ENCODE measurements at regions of chr19 and their contacts with region 1.

Region 1: DNA sequence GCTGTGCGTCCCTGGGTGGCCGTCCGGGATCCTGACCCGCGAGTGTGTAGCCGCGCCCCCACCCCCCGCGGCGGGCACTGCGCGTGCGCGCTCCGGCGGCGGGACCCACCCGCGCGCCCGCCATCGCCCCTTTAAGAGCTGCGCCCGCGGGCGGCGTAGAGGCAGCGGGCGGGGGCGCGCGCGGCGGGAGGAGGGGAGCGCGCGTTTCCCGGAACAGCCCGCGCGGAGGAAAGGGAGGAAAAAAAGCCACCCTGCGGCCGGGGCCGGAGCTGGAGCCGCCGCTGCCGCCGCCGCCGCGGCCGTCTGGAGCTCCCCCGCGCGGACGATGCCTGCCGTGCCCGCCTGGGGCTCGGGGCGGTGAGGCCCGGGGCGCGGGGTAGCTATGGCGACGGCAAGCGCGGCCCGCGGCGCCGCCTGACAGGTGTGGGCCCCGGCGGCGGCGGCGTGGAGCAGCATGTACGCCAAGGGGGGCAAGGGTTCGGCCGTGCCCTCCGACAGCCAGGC is at the start of gene SSBP4:
- DNase-seq: peak; percentile 77 to 90
- H3K4me3 ChIP-seq: peak within 1 kb of the TSS; percentile 85
- H3K4me3 Mint-ChIP-seq: peak within 1 kb of the TSS; percentile 89
- H3K27ac Mint-ChIP-seq: peak within 1 kb of the TSS; percentile 24
- H3K4me1 ChIP-seq: peaks cover 41% of the 10 kb centered on the region
- H3K4me1 Mint-ChIP-seq: peaks cover 7% of the 10 kb centered on the region
- H3K27me3 ChIP-seq: no peaks in the 10 kb centered on the region
- H3K27me3 Mint-ChIP-seq: no peaks in the 10 kb centered on the region
- CTCF ChIP-seq: peak; percentile 22 to 39
- total RNA-seq, gene SSBP4: 46.2 and 49.4 TPM in 2 replicates

Region 2: DNA sequence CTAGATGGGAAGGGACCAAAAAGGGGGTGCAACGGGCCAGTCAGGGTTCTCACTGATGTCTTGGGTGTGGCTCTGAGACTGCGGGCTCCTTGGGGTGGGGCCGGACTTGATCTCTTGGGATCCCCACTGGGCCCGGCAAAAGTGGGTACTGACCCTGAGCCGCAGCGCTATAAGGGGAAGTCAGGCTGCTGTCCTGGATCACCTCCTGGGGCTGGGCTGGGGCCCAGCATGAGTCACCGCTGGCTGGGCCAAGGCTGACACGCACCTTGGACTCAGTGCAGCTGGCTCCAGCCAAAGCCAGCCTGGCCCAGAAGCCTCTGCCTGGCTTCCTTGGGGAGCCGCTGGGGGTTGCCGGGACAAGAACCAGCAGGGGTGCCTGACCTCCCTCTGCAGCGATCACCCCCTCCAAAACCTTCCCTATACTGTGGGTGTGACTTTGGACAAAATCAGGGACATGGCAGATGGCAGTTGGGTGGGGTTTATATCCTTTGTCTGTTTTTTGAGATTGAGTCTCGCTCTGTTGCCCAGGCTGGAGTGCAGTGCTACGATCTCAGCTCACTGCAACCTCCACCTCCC is 144.4 kb before region 1 on chr19:
- CTCF ChIA-PET with region 1: interaction called, 15 read pairs
- POLR2A ChIA-PET with region 1: interaction called, 14 read pairs
- intact Hi-C with region 1: no loop called
- DNase-seq: peak; percentile 73 to 75
- H3K4me3 ChIP-seq: no peak overlapping the region
- H3K4me3 Mint-ChIP-seq: peak overlapping the region; percentile 24
- H3K27ac Mint-ChIP-seq: peak overlapping the region; percentile 59
- H3K4me1 ChIP-seq: peaks cover 30% of the 10 kb centered on the region
- H3K4me1 Mint-ChIP-seq: peaks cover 12% of the 10 kb centered on the region
- H3K27me3 ChIP-seq: no peaks in the 10 kb centered on the region
- H3K27me3 Mint-ChIP-seq: peaks cover 6% of the 10 kb centered on the region
- CTCF ChIP-seq: no peak

Region 3: DNA sequence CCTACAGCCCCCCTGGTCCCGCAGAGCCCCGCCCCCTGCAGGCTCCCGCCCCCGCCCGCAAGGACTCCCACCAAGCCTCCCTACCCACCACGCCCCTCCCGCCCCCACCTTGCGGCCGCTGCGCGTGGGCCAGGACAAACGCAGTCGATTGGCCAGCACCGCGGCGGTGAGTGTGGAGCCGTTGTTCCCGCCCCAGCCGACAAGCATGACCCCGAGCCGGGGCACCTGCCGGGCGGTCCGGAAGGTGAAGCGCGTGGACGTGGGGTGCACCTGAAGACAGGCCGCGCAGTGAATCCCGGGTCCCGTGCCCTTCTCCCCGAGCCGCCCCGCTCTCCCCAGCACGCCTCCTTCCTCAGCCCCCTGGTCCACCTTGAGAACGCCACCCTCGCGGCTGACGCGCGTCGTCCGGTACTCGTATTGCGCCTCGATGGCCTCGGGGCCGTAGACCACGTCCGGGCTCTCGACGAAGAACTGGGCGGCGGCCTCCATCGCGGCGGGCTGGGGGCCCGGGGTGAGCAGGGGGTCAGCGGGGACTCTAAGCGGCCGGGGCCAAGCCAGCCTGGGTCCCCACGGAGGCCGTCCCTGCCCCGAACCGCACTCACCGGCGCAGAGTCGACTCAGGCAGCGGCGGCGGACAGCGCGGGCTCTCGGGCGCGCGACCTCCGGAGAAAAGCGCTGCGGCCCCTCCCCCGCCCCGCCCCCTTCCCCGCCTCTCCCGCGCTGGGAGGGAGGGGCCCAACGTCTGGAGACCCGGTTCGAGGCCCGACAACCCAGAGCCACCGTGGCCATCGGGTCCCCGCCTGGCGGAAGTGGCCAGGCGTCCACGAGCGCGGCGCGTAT is 18.5 kb after region 1 on chr19 and contains the start of gene ISYNA1:
- CTCF ChIA-PET with region 1: interaction called, 3 read pairs
- POLR2A ChIA-PET with region 1: interaction called, 4 read pairs
- intact Hi-C with region 1: loop called (anchors 1 kb)
- DNase-seq: peak; percentile 56 to 57
- H3K4me3 ChIP-seq: peak within 1 kb of the TSS; percentile 75
- H3K4me3 Mint-ChIP-seq: peak within 1 kb of the TSS; percentile 78
- H3K27ac Mint-ChIP-seq: peak within 1 kb of the TSS; percentile 67
- H3K4me1 ChIP-seq: peaks cover 10% of the 10 kb centered on the region
- H3K4me1 Mint-ChIP-seq: peaks cover 16% of the 10 kb centered on the region
- H3K27me3 ChIP-seq: no peaks in the 10 kb centered on the region
- H3K27me3 Mint-ChIP-seq: no peaks in the 10 kb centered on the region
- CTCF ChIP-seq: no peak
- total RNA-seq, gene ISYNA1: 65.3 and 67.3 TPM in 2 replicates